B cell (primary cell): ENCODE measurements at regions of chr19 and their contacts with region 1.

Region 1: DNA sequence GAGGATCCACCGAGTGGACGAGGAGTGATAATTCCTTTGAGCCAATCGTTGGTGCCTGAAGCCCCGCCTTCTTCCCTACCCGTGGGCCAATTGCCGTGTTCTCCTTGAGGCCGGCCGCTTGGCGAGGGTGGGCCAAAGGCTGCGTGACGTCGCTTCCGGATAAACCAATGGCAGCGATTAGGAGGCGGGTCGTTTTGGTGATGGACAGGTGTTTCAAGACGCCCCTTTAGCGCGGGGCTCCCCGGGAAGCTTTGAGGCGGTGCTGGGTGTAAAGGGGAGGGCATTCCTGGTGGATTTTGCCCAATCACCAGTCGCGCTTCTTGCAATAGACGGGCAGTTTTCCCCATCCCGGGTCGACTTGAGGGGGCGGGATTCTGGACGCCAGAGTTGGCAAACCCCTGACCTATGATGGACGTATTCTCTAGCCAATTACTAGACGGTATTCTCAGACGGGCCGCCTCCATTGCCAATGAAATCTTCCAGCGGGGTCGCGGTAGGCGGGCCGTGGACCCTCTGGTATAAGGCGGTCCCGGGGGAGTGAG is 310 bp upstream of the PRMT1 start:
- DNase-seq: peak; percentile 100
- ATAC-seq: peak; percentile 69
- H3K4me3 ChIP-seq: peak overlapping the region; percentile 88 to 98 (median 97)
- H3K4me3 Mint-ChIP-seq: peak overlapping the region; percentile 100
- H3K27ac ChIP-seq: peak overlapping the region; percentile 93 to 98
- H3K27ac Mint-ChIP-seq: peak overlapping the region; percentile 96
- H3K4me1 ChIP-seq: peaks cover 42 to 78% of the 10 kb centered on the region in 2 donors
- H3K4me1 Mint-ChIP-seq: peaks cover 64% of the 10 kb centered on the region
- H3K27me3 ChIP-seq: no peaks in the 10 kb centered on the region
- H3K27me3 Mint-ChIP-seq: no peaks in the 10 kb centered on the region
- CTCF ChIP-seq: no peak

Region 2: DNA sequence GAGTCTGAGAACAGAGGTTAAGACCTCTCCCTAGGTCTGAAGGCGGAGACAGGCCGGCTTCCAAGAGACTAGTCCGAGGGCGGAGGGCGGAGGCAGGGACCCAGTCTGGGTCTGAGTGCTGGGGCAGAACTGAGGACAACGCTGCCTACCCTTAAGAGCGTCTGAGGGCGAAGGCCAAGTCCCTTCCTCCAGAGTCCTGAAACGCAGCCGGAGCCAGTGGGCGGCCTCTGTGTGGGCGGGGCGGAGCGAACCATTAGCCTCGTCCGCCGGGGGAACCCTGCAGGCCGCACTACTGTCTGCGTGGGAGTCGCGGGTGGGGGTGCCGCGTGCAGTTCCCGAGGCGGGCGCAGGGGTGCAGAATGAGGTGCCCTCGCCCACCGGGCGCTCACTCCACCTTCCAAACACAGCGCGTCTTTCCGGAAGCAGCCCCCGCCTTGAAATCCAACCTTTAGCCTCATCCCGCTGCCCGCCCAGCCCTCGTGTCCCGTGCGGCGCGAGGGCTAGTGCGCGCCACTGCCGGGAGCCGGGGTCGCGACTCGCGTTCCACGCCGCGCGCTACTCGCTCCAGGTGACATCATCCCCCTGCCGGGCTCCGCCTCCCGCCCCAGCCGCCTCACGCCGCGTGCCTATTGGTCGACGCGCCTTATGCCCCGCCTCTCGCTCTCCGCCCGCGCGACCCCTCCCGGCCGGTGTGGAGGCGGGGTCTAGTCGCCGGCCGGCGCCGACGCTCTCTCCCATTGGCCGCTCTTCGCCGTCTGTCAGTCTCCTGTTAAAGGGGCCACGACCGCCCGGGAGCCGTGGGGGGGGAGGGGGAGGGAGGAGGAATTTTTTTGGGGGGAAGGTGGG is 558.0 kb before region 1 on chr19 and contains the start of gene C19orf73:
- CTCF ChIA-PET with region 1: no interaction called
- POLR2A ChIA-PET with region 1: no interaction called
- intact Hi-C with region 1: loop called (anchors 10 kb)
- DNase-seq: peak; percentile 99
- ATAC-seq: peak; percentile 81
- H3K4me3 ChIP-seq: peak within 1 kb of the TSS; percentile 39 to 88 (median 62)
- H3K4me3 Mint-ChIP-seq: peak within 1 kb of the TSS; percentile 90
- H3K27ac ChIP-seq: peak within 1 kb of the TSS; percentile 93 to 95
- H3K27ac Mint-ChIP-seq: peak within 1 kb of the TSS; percentile 93
- H3K4me1 ChIP-seq: peaks cover 22 to 33% of the 10 kb centered on the region in 2 donors
- H3K4me1 Mint-ChIP-seq: peaks cover 41% of the 10 kb centered on the region
- H3K27me3 ChIP-seq: peaks cover 0 to 11% (median 2%) of the 10 kb centered on the region in 4 experiments
- H3K27me3 Mint-ChIP-seq: peaks cover 6% of the 10 kb centered on the region
- CTCF ChIP-seq: peak; percentile 53
- total RNA-seq, gene C19orf73: 3.9 and 5.3 TPM in 2 replicates

Region 3: DNA sequence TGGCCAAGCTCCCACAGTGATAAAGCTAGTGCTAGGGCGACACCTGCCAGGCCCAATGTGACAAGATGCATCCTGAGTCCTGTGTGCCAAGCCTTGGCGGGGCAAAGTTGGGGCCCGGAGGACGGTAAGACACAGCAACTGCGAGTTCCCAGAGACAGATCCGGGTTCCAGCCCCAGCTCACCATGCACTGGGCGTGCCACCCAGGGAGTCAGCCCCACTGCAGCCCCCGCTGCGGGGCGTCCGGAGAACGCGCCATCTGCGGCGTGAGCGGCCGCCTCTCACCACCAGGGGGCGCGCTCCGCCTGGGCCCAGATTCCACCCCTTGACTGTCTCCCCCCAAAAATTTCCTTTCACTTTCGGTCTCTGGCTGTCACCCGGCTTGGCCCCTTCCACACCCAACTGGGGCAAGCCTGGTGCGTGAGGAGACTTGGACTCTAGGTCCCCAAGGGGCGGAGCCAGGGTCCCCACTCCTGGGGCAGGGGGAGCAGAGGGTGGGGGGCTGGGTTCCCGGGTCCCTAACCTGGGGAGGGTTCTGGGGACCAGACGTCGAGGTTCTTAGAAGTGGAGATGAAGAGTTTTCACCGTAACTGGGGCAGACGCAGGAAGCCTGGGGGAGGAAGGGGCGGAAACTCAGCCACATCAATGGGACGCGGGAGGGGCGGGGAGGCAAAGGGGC is 202.8 kb before region 1 on chr19 and contains the start of gene FLT3LG:
- CTCF ChIA-PET with region 1: interaction called, 9 read pairs
- POLR2A ChIA-PET with region 1: interaction called, 5 read pairs
- intact Hi-C with region 1: loop called (anchors 1 kb)
- DNase-seq: peak; percentile 94
- ATAC-seq: peak; percentile 52
- H3K4me3 ChIP-seq: peak within 1 kb of the TSS in 4 of 5 experiments; percentile 53 to 98 (median 70)
- H3K4me3 Mint-ChIP-seq: peak within 1 kb of the TSS; percentile 93
- H3K27ac ChIP-seq: peak within 1 kb of the TSS; percentile 75 to 81
- H3K27ac Mint-ChIP-seq: peak within 1 kb of the TSS; percentile 97
- H3K4me1 ChIP-seq: peaks cover 43 to 73% of the 10 kb centered on the region in 2 donors
- H3K4me1 Mint-ChIP-seq: peaks cover 57% of the 10 kb centered on the region
- H3K27me3 ChIP-seq: no peaks in the 10 kb centered on the region
- H3K27me3 Mint-ChIP-seq: no peaks in the 10 kb centered on the region
- CTCF ChIP-seq: peak; percentile 89
- total RNA-seq, gene FLT3LG: 27.8 and 31.0 TPM in 2 replicates

Region 4: DNA sequence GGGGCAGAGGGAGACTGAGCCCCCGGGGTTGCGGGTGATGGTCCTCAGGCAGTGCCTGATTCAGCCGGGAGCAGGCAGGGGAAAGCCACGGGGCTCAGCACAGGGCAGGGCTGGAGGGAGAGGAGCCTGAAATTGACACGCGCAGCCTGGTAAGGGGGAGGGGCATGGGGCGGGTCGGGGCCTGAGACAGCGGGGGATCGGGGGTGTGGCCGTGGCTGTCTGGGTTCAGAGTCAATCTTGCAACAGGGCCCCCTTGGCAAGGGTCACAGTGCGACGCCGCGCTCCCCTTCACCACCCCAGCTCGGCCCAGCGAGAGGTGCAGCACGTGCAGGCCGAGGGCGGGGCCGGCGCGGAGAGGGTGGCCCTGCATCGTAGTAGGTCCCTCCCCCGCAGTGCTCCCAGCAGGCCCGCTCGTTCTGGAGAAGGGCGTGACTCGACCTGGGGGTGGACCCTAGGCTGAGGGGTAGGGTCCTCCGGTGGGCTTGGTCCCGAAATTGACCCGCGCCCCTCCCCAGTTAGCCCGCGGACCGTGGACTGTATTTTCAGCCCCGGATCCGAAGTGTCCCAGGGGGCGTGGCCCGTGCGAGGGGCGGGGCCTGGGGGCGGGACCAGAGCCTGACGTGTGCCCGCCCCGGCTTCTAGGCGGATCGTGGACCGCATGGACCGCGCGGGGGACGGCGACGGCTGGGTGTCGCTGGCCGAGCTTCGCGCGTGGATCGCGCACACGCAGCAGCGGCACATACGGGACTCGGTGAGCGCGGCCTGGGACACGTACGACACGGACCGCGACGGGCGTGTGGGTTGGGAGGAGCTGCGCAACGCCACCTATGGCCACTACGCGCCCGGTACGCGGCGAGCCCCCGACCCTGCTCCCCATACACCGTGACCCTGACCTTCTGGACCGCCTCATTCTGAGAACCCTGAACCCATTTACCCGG is 142.9 kb before region 1 on chr19:
- CTCF ChIA-PET with region 1: interaction called, 6 read pairs
- POLR2A ChIA-PET with region 1: interaction called, 12 read pairs
- intact Hi-C with region 1: no loop called
- DNase-seq: peak; percentile 93
- ATAC-seq: peak; percentile 85
- H3K4me3 ChIP-seq: peak overlapping the region; percentile 16 to 76 (median 61)
- H3K4me3 Mint-ChIP-seq: peak overlapping the region; percentile 86
- H3K27ac ChIP-seq: no peak overlapping the region
- H3K27ac Mint-ChIP-seq: peak overlapping the region; percentile 27
- H3K4me1 ChIP-seq: peaks cover 32 to 47% of the 10 kb centered on the region in 2 donors
- H3K4me1 Mint-ChIP-seq: peaks cover 40% of the 10 kb centered on the region
- H3K27me3 ChIP-seq: peaks cover 0 to 6% (median 1%) of the 10 kb centered on the region in 4 experiments
- H3K27me3 Mint-ChIP-seq: no peaks in the 10 kb centered on the region
- CTCF ChIP-seq: peak; percentile 64

Region 5: GRCh38 chr19:49590071-49590970 is 86.4 kb before region 1 on chr19:
- CTCF ChIA-PET with region 1: interaction called, 5 read pairs
- POLR2A ChIA-PET with region 1: interaction called, 10 read pairs
- intact Hi-C with region 1: loop called (anchors 1 kb)
- DNase-seq: peak; percentile 97
- ATAC-seq: peak; percentile 80
- H3K4me3 ChIP-seq: peak overlapping the region; percentile 69 to 85 (median 77)
- H3K4me3 Mint-ChIP-seq: peak overlapping the region; percentile 84
- H3K27ac ChIP-seq: peak overlapping the region; percentile 72 to 85
- H3K27ac Mint-ChIP-seq: peak overlapping the region; percentile 91
- H3K4me1 ChIP-seq: peaks cover 16 to 26% of the 10 kb centered on the region in 2 donors
- H3K4me1 Mint-ChIP-seq: peaks cover 27% of the 10 kb centered on the region
- H3K27me3 ChIP-seq: no peaks in the 10 kb centered on the region
- H3K27me3 Mint-ChIP-seq: no peaks in the 10 kb centered on the region
- CTCF ChIP-seq: peak; percentile 13

Region 6: GRCh38 chr19:49624967-49625910 is 51.5 kb before region 1 on chr19:
- CTCF ChIA-PET with region 1: no interaction called
- POLR2A ChIA-PET with region 1: no interaction called
- intact Hi-C with region 1: no loop called
- DNase-seq: no peak
- ATAC-seq: no peak
- H3K4me3 ChIP-seq: no peak overlapping the region
- H3K4me3 Mint-ChIP-seq: no peak overlapping the region
- H3K27ac ChIP-seq: no peak overlapping the region
- H3K27ac Mint-ChIP-seq: no peak overlapping the region
- H3K4me1 ChIP-seq: no peaks in the 10 kb centered on the region
- H3K4me1 Mint-ChIP-seq: no peaks in the 10 kb centered on the region
- H3K27me3 ChIP-seq: no peaks in the 10 kb centered on the region
- H3K27me3 Mint-ChIP-seq: no peaks in the 10 kb centered on the region
- CTCF ChIP-seq: no peak

Region 7: GRCh38 chr19:49766007-49766937 is 89.5 kb after region 1 on chr19:
- CTCF ChIA-PET with region 1: interaction called, 3 read pairs
- POLR2A ChIA-PET with region 1: interaction called, 12 read pairs
- intact Hi-C with region 1: loop called (anchors 1 kb)
- DNase-seq: peak; percentile 100
- ATAC-seq: peak; percentile 85
- H3K4me3 ChIP-seq: peak overlapping the region; percentile 49 to 78 (median 71)
- H3K4me3 Mint-ChIP-seq: peak overlapping the region; percentile 93
- H3K27ac ChIP-seq: peak overlapping the region; percentile 74 to 76
- H3K27ac Mint-ChIP-seq: peak overlapping the region; percentile 98
- H3K4me1 ChIP-seq: peaks cover 15 to 24% of the 10 kb centered on the region in 2 donors
- H3K4me1 Mint-ChIP-seq: peaks cover 35% of the 10 kb centered on the region
- H3K27me3 ChIP-seq: no peaks in the 10 kb centered on the region
- H3K27me3 Mint-ChIP-seq: no peaks in the 10 kb centered on the region
- CTCF ChIP-seq: no peak

Region 8: DNA sequence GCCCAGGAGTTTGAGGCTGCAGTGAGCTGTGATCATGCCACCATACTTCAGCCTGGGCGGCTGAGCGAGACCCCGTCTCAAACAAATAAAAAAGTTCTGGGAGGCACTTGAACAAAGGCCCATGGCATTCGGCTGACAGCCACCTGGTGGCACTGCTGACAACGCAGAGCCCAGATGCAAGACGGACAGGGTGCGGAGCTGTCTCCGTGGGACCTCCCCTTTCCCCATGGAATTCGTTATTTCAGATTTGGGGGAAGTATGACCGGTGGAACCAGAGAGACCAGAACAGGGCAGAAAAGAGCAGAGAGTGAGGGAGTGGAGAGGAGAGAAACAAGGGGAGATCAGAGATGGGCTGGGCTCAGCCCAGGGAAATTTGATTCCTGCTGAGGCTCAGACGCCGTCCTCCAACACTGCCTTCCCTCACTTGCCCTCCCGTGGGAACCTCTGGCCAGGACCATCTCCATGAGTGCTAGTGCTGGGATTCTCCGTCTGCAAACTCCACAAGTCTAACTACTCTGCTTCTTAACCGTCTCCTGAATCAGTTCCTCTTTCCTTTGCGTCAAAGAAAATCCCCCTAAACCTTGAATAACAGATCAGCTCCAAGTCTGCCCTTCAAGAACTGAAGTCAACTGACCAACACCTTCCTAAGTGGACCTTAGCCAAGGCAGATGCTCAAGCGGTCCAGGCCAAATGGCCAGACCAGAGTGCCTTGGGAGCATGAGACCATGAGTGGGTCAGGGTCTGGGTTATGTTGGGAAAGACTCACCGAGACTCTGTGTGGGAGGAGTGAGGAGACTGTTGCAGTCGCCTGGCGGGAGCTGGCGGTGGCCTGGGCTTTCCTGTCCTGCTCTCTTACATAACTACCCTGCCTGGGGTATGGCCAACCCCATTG is 240.3 kb after region 1 on chr19:
- CTCF ChIA-PET with region 1: no interaction called
- POLR2A ChIA-PET with region 1: no interaction called
- intact Hi-C with region 1: no loop called
- DNase-seq: no peak
- ATAC-seq: peak; percentile 67
- H3K4me3 ChIP-seq: no peak overlapping the region
- H3K4me3 Mint-ChIP-seq: peak overlapping the region; percentile 88
- H3K27ac ChIP-seq: peak overlapping the region; percentile 34 to 50
- H3K27ac Mint-ChIP-seq: peak overlapping the region; percentile 95
- H3K4me1 ChIP-seq: peaks cover 0 to 6% of the 10 kb centered on the region in 2 donors
- H3K4me1 Mint-ChIP-seq: peaks cover 54% of the 10 kb centered on the region
- H3K27me3 ChIP-seq: no peaks in the 10 kb centered on the region
- H3K27me3 Mint-ChIP-seq: no peaks in the 10 kb centered on the region
- CTCF ChIP-seq: peak; percentile 47